BJ (cell line): ENCODE measurements at regions of chr10 and their contacts with region 1.

Region 1: DNA sequence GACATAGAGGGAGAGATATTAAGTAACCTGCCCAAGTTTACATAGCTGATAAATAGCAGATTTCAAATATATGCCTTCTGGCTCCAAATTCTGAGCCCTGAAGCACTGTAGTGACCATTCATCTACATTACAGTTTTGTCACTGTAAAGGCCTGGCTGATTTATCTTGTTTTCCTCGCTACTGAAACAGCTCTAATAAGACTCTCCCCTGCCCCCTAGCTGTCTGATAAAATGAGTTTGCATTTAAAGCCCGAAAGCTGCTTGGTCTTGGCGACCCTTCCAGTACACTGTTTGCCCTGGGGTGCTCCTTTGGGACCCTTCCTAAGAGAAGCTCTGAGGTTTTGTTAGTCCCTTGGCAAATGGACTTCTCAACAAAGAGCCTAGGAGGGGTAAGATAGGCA is 59.7 kb upstream of the RAB11FIP2 start:
- DNase-seq: no peak
- H3K4me3 ChIP-seq: no peak overlapping the region
- H3K27me3 ChIP-seq: no peaks in the 10 kb centered on the region
- CTCF ChIP-seq: peak; percentile 42

Region 2: GRCh38 chr10:119253433-119254174 is 1147.2 kb after region 1 on chr10:
- CTCF ChIA-PET with region 1: no interaction called
- POLR2A ChIA-PET with region 1: interaction called, 10 read pairs
- DNase-seq: peak; percentile 92
- H3K4me3 ChIP-seq: no peak overlapping the region
- H3K27me3 ChIP-seq: no peaks in the 10 kb centered on the region
- CTCF ChIP-seq: peak; percentile 47